Common myeloid progenitor, CD34-positive (primary cell): ENCODE measurements at regions of chr17 and their contacts with region 1.

Region 1: GRCh38 chr17:74872313-74873037 is at the start of gene FDXR:
- DNase-seq: no peak
- H3K4me3 ChIP-seq: peak within 1 kb of the TSS; percentile 68 to 95 (median 85)
- H3K27ac ChIP-seq: peak within 1 kb of the TSS; percentile 86 to 94
- H3K4me1 ChIP-seq: peaks cover 4 to 29% (median 13%) of the 10 kb centered on the region in 4 experiments
- H3K27me3 ChIP-seq: no peaks in the 10 kb centered on the region

Region 2: DNA sequence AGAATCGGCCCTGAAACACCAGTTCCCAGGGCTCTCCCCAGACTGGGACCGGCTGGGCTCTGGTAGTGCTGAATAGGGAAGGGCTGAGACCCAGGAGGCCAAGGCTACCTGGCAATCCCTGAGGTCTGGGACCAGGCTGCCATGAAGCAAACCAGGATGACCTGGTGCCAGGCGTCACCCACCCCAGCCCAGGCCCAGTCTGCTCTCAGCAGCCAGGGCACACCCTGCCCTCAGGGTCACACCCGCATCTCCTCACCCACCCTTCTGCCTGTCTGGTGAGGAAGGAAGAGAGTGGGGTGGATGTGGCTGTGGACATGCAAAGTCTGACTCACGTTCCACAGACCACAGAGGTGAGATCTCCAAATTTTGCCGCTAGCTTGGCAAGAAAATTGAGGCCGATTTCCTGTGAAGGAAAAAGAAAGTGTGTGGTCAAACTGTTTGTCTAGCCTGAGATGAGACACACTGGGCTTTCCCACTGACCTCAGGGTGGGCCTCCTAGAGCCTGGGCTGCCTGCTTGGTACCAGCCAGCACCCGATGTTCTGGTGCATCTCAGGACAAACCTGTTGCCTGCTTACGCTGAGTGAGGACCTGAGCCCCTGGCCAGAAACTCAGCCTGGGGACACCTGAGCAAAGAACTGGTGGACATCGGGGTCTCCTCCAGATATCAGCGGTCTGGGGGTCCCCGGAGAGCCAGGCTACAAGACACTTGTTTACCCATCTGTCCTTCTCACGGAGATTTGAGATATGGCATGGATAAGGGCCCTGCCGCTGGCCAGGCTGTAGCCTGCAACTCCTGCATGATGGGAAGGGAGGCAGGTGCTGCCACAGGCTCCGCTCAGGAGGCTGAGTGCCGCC is 141.8 kb before region 1 on chr17:
- CTCF ChIA-PET with region 1: no interaction called
- POLR2A ChIA-PET with region 1: no interaction called
- DNase-seq: peak; percentile 66 to 92 (median 88)
- H3K4me3 ChIP-seq: peak overlapping the region in 1 of 7 experiments; percentile 0
- H3K27ac ChIP-seq: no peak overlapping the region
- H3K4me1 ChIP-seq: peaks cover 0 to 27% (median 25%) of the 10 kb centered on the region in 4 experiments
- H3K27me3 ChIP-seq: no peaks in the 10 kb centered on the region

Region 3: GRCh38 chr17:74859459-74860228 is 12.8 kb before region 1 on chr17 and contains the start of gene GRIN2C:
- CTCF ChIA-PET with region 1: interaction called, 14 read pairs
- POLR2A ChIA-PET with region 1: no interaction called
- DNase-seq: peak in 2 of 3 donors; percentile 24 to 43
- H3K4me3 ChIP-seq: peak within 1 kb of the TSS in 4 of 7 experiments; percentile 19 to 52 (median 38)
- H3K27ac ChIP-seq: no peak within 1 kb of the TSS
- H3K4me1 ChIP-seq: peaks cover 0 to 28% (median 20%) of the 10 kb centered on the region in 4 experiments
- H3K27me3 ChIP-seq: peaks cover 0 to 72% (median 28%) of the 10 kb centered on the region in 5 experiments